ENCODE measurements at regions of chr7 and their contacts with region 1.

Region 1: DNA sequence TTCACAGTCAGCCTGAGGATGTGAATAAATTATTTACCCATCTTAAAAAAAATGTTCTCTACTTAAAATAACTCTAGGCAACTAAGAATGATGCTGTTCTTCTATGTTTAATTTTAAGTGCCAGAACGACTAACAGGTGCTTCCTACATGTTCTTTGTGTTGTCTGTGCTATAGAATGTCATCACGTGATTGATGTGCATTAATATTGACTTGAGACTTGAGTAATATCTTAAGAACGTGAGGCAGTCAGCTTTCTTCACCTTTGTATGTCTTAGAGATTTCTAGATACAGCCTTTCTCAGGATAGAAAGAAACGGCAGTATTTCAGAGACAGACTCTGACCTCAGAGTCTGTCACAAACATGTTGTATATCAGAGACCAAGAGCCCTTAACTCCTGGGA is 274.6 kb downstream of the KCND2 start:
- ATAC-seq: no peak
- H3K4me3 ChIP-seq: no peak overlapping the region
- H3K27ac ChIP-seq: no peak overlapping the region
- H3K4me1 ChIP-seq: peaks cover 7 to 20% of the 10 kb centered on the region in 2 donors

Region 2: GRCh38 chr7:120123528-120123927 is 424.1 kb before region 1 on chr7:
- in situ Hi-C with region 1: no loop called
- ATAC-seq: no peak
- H3K4me3 ChIP-seq: no peak overlapping the region
- H3K27ac ChIP-seq: no peak overlapping the region
- H3K4me1 ChIP-seq: no peaks in the 10 kb centered on the region

Region 3: GRCh38 chr7:120280743-120281142 is 266.9 kb before region 1 on chr7:
- in situ Hi-C with region 1: loop called in 1 of 9 experiments (anchors 25 kb)
- ATAC-seq: peak in 4 of 8 experiments; percentile 34 to 64 (median 54)
- H3K4me3 ChIP-seq: no peak overlapping the region
- H3K27ac ChIP-seq: no peak overlapping the region
- H3K4me1 ChIP-seq: peaks cover 0 to 10% of the 10 kb centered on the region in 2 donors

Measured in motor neuron (in vitro differentiated cells).